ENCODE measurements at regions of chr9 and their contacts with region 1.

Region 1: DNA sequence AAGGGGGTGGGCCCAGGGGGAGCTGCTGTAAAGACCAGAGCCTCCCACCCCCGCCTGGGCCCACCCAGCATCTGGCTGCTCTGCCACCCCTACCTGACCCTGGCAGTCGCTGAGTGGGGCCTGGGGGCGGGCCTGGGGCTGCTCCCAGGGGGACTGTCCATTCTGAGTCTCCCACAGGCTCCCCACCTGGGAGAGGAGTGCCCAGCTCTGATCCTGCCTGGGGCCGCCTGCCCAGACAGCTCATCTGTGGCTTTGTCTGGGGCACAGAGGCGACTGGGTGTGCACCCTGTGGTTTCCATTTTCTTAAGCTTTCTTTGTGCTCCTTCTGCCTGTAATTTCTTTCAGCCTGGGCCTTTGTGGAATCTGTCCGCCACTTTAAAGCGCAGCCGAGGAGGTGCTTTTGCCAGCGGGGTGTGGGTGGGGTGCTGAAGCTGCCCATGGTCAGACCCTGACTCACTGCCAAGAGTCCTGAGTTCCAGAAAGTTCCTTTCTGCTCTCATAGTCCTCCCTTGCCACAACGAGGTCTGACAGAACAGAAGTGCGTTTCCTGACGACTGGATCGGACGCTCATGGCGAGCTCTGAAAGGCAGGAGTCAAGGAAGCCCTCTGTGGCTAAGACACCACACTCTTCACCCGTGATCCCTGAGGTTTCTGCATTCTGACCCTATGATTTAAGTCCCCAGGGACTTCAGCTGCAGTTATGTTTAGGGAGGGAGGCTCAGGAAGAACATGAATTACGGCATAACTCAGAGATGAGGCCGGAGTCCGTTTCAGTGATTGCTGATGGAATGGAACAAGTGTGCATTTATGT is 225.0 kb downstream of the FANCC start:
- DNase-seq: peak; percentile 87 to 96
- H3K4me3 ChIP-seq: no peak overlapping the region
- H3K27ac ChIP-seq: peak overlapping the region; percentile 88
- H3K4me1 ChIP-seq: peaks cover 47% of the 10 kb centered on the region
- H3K27me3 ChIP-seq: no peaks in the 10 kb centered on the region
- CTCF ChIP-seq: no peak

Region 2: DNA sequence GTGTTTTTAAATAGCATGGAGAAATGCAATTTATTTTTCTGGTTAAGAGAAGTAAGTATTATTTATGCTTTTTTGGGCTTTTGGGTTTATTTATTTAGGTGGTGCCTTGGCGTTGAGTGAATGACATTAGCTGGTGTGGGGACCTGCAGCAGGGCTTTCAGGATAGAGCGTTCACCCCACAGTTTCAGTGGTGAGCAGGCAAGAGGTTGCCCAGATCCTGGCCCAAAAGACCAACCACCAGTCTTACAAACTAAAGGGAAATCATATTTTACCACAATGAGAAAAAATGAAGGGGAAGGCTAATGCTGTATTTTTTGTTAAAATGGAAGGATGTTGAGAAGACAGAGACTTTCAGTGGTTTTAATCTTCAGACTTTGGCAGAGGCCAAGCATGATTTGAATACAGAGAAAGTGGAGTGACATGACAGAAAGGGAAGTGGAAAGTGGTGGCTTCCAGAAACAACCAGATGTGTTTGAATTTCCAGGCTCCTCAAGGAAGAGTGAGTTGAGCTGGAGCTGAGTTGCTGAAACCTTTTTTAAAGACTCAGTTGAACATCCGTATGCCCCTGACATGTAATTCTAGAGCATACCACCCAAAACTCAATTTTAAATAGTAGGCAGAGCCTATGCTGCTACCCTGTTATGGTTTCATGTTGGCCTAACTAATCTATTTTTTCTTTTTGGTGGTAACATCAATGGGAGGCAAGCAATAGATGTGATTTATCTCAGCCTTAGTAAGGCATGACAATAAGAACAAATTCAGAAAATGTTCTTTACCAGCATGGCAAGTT is 271.2 kb before region 1 on chr9:
- CTCF ChIA-PET with region 1: no interaction called
- POLR2A ChIA-PET with region 1: interaction called, 20 read pairs
- intact Hi-C with region 1: no loop called
- DNase-seq: no peak
- H3K4me3 ChIP-seq: no peak overlapping the region
- H3K27ac ChIP-seq: peak overlapping the region; percentile 96; the same call in 1 of the 2 replicates
- H3K4me1 ChIP-seq: peaks cover 64% of the 10 kb centered on the region
- H3K27me3 ChIP-seq: no peaks in the 10 kb centered on the region
- CTCF ChIP-seq: no peak

Region 3: DNA sequence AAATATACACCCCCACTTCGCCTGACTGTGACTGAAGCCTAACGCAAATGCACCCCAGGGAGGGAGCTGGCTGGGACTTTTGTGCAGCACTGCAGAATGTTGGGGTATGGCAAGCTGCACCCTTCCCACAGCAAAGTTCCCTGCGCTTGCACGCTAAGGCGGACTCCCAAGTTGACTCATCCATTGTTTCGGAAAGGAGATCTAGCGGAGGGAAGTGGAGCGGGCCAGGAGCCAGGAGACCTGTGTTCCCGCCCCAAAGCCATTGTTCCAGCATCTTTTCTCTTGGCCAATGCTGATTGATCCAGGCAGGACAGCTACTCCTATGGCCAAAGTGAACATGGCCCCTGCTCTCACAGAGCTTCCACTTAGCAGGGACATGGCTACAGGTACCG is 163.1 kb before region 1 on chr9:
- CTCF ChIA-PET with region 1: no interaction called
- POLR2A ChIA-PET with region 1: interaction called, 7 read pairs
- intact Hi-C with region 1: loop called (anchors 2 kb)
- DNase-seq: peak in 1 of 2 experiments; percentile 89
- H3K4me3 ChIP-seq: no peak overlapping the region
- H3K27ac ChIP-seq: no peak overlapping the region
- H3K4me1 ChIP-seq: peaks cover 26% of the 10 kb centered on the region
- H3K27me3 ChIP-seq: no peaks in the 10 kb centered on the region
- CTCF ChIP-seq: no peak

Region 4: DNA sequence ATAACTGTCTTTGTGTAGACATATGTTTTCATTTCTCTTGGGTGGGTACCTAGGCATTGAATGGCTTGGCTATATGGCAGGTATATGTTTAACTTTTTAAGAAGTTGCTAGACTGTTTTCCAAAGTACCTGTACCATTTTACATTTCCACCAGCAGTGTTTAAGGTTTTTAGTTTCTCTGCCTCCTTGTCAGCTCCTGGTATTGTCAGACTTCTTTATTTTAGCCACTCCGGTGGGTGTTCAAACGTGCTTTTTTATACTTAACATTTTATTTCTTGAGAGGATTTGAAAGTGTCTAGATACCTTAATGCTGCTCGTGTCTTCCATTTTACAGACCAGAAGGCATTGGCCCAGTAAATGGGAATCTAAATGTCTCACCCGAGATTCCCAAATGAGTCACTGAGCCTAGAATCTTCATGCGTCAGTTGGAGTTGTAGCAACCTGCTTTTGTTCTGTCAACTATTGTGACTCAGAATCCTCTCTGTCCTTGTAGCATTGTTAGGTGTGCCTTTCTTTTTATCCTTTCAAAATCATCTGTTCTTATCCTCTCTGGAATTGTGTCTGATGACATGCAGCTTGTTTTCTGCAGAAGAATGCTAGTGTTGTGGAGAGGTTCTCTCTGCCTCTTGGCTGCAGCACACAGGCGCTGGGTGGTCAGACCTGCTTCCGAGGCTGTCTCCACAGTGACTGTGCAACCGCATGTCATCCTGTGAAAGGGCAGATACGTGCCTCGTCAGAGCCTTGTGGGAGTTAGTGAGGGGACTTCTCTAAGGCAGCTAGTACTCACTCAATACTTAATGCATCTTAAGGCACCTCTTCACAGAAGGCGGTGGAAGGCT is 74.1 kb before region 1 on chr9:
- CTCF ChIA-PET with region 1: no interaction called
- POLR2A ChIA-PET with region 1: no interaction called
- intact Hi-C with region 1: loop called (anchors 5 kb)
- DNase-seq: peak in 1 of 2 experiments; percentile 77
- H3K4me3 ChIP-seq: no peak overlapping the region
- H3K27ac ChIP-seq: peak overlapping the region; percentile 38
- H3K4me1 ChIP-seq: peaks cover 12% of the 10 kb centered on the region; the same call in 1 of the 2 replicates
- H3K27me3 ChIP-seq: no peaks in the 10 kb centered on the region
- CTCF ChIP-seq: no peak

Region 5: DNA sequence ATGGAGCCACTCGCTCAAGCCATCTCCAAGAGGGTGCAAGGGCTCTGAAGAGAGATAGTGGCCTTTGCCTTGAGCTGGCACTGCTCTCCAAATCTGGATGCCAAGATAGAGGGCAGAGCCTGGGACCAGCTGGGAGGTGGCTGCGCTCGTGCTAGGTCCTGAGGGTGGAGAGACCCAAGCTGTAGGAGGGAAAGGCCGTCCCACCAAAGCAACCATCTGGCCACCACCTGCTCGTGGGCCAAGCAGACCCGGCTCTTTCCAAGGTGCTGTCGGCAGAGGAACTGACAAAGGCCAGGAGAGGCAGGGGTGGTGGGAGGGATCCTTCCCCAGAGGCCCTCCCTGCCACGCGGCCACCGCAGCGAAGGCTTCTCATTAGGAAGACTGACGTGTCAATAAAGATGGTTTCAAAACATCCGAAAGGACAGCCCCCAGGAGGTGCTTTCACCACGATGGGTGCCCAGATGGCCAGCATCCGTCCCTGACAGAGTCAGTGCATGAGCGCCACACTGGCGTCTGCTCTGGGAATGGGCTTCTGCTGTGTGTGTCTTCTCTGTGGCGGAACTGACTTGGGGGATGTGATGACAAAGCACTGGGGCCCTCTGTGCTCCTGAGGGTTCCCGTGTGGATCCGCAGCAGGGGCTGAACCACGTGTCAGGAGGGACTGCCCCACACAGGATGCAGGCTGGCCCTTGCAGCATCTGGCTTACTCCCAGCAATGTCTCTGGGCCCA is 11.5 kb after region 1 on chr9:
- CTCF ChIA-PET with region 1: no interaction called
- POLR2A ChIA-PET with region 1: interaction called, 3 read pairs
- intact Hi-C with region 1: loop called (anchors 1 kb)
- DNase-seq: no peak
- H3K4me3 ChIP-seq: no peak overlapping the region
- H3K27ac ChIP-seq: peak overlapping the region; percentile 72; the same call in 1 of the 2 replicates
- H3K4me1 ChIP-seq: peaks cover 16% of the 10 kb centered on the region
- H3K27me3 ChIP-seq: no peaks in the 10 kb centered on the region
- CTCF ChIP-seq: no peak